Aorta (tissue), 5 donors: ENCODE measurements at regions of chr19 and their contacts with region 1.

Region 1: GRCh38 chr19:53333463-53334449 is at the start of gene ZNF845:
- DNase-seq: peak; percentile 97 to 98
- ATAC-seq: peak; percentile 100
- H3K4me3 ChIP-seq: peak within 1 kb of the TSS; percentile 76 to 86
- H3K27ac ChIP-seq: peak within 1 kb of the TSS; percentile 11 to 69
- H3K4me1 ChIP-seq: no peaks in the 10 kb centered on the region
- H3K27me3 ChIP-seq: no peaks in the 10 kb centered on the region
- total RNA-seq, gene ZNF845: 7.3 to 7.5 TPM

Region 2: GRCh38 chr19:53183146-53183764 is 150.5 kb before region 1 on chr19:
- intact Hi-C with region 1: no loop called
- DNase-seq: no peak
- ATAC-seq: no peak
- H3K4me3 ChIP-seq: no peak overlapping the region
- H3K27ac ChIP-seq: no peak overlapping the region
- H3K4me1 ChIP-seq: no peaks in the 10 kb centered on the region
- H3K27me3 ChIP-seq: no peaks in the 10 kb centered on the region

Region 3: GRCh38 chr19:53254411-53255341 is 79.1 kb before region 1 on chr19 and contains the start of gene ZNF677:
- intact Hi-C with region 1: loop called in 1 of 2 experiments (anchors 5 kb)
- DNase-seq: peak; percentile 96 to 98
- ATAC-seq: peak; percentile 100
- H3K4me3 ChIP-seq: peak within 1 kb of the TSS; percentile 69 to 92
- H3K27ac ChIP-seq: peak within 1 kb of the TSS in 1 of 2 donors; percentile 1
- H3K4me1 ChIP-seq: no peaks in the 10 kb centered on the region
- H3K27me3 ChIP-seq: no peaks in the 10 kb centered on the region
- total RNA-seq, gene ZNF677: 18.5 to 23.5 TPM

Region 4: DNA sequence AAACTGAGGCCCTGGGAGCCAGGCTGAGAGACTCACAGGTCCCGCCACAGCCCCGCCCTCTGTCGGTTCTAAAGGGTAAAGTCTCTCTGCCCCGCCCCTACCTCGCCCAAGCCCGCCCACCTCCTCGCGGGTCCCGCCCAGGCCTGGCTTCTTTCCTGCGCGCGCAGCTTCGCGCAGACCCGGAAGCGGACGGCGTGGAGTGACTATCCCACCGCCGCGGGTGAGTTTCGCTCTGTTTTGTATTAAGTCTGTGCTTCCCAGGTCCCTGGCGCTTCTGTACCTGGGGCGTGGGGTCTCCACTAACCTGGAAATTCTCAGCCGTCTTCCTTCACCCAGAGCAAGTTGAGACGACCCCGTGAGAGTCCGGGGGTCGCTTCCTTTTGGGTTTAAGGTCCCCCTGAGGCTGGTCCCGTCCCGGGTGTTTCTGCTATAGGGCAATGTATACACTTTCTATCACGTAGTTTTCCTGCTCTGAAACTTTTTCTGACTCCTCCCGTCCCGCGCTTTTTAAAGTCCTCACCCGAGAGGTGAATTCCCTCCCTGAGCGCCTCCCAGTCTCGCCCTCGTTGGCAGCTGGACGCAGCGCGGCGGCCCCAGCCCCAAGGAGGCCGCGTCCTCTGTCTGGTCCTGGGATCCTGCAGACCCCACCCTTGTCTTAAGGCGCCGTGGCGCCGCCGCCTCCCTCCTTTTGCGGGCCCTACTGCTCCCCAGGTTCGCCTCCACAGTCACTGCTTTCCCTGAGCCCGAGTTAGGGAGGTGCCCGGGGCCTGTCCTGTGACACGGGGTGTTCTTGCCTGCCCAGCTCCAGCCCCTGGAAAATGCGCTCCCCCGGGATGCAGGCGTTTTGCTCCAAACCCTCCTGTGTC is 61.5 kb after region 1 on chr19 and contains the start of gene ZNF765:
- intact Hi-C with region 1: loop called in 1 of 2 experiments (anchors 2 kb)
- DNase-seq: peak; percentile 96 to 99
- ATAC-seq: peak; percentile 100
- H3K4me3 ChIP-seq: peak within 1 kb of the TSS; percentile 60 to 83
- H3K27ac ChIP-seq: peak within 1 kb of the TSS; percentile 8 to 81
- H3K4me1 ChIP-seq: no peaks in the 10 kb centered on the region
- H3K27me3 ChIP-seq: no peaks in the 10 kb centered on the region
- total RNA-seq, gene ZNF765: 9.4 to 13.5 TPM